Activated naive CD4-positive, alpha-beta T cell treated with anti-CD3 and anti-CD28 coated beads for 36 hours (primary cell): ENCODE measurements at regions of chr6 and their contacts with region 1.

Region 1: DNA sequence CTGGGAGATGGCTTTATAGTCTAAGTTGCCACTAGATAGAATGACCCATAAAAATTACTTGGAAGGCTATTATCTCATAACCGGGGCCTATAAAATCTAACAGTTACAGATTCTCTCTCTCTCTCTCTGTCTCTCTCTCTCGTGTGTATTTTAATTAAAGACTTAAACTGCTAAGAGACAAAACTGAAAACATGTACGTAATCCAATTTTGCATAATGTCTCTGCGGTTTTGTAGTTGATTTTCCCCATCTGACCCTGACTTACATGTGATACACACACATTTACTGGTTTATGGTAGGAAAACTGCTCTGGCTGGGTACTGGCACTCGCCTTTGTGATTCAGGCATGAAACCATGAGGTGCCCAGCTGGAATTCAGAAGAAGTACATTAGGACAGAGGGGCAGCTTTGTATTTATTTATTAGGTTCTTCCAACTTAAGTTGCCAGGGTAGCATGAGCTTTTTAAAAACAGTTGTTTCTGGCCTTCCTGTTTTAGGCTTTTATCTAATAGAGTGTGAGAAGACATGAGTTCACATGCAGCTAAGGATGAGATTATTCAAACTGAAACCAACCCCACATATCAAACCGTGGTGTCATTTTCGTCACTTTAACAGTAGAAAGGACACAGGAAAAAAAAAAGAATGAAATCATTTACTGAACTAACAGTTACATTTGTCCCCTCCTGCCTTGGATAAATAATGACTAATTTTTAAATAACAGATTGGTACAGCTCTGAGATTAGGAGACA is 182.5 kb downstream of the GMPR start:
- DNase-seq: peak; percentile 66
- H3K4me3 Mint-ChIP-seq: peak overlapping the region; percentile 45
- H3K27ac Mint-ChIP-seq: peak overlapping the region; percentile 95
- H3K4me1 Mint-ChIP-seq: peaks cover 42% of the 10 kb centered on the region
- H3K27me3 Mint-ChIP-seq: no peaks in the 10 kb centered on the region

Region 2: DNA sequence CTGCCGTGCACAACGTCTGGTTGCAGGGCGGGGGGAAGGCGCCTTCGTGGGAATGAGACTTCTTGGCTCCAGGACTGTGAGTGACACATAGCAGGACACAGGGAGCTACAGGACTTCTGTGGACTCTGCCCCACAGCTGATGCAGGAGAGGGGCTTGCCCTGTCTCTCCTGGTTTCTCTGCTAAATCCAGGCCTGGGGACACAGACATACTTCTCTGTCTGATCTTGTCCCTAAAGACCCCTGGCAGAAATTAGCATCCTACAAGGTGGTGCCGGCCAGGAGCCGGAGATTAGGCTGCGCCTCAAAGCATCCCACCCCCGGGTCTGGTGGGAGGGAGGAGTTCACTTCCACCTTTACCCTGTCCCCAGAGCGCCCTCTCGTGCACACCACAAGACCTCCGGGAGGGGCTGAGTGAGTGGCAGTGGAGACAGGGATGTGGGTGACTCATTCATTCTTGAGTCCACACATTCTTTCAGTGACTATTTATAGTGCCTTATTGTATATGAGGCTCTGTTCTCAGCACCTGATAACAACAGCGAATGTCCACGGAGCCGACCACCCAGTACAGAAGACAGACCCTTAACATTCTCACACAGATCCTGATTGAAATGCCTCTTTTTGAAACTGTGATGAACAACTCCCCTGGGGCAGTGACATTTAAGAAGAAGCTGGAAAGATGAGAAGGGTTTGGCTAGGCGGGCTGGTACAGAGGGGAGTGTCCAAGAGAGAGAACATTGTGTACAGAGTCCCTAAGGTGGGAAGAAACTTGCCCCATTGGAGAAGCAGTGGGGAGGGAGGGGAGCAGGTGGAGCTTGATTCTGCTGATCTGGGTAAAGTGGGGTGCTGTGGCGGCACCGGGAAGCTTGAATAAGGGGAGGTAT is 143.5 kb before region 1 on chr6:
- CTCF ChIA-PET with region 1: no interaction called
- intact Hi-C with region 1: no loop called
- DNase-seq: peak; percentile 42
- H3K4me3 Mint-ChIP-seq: no peak overlapping the region
- H3K27ac Mint-ChIP-seq: no peak overlapping the region
- H3K4me1 Mint-ChIP-seq: peaks cover 2% of the 10 kb centered on the region
- H3K27me3 Mint-ChIP-seq: no peaks in the 10 kb centered on the region

Region 3: DNA sequence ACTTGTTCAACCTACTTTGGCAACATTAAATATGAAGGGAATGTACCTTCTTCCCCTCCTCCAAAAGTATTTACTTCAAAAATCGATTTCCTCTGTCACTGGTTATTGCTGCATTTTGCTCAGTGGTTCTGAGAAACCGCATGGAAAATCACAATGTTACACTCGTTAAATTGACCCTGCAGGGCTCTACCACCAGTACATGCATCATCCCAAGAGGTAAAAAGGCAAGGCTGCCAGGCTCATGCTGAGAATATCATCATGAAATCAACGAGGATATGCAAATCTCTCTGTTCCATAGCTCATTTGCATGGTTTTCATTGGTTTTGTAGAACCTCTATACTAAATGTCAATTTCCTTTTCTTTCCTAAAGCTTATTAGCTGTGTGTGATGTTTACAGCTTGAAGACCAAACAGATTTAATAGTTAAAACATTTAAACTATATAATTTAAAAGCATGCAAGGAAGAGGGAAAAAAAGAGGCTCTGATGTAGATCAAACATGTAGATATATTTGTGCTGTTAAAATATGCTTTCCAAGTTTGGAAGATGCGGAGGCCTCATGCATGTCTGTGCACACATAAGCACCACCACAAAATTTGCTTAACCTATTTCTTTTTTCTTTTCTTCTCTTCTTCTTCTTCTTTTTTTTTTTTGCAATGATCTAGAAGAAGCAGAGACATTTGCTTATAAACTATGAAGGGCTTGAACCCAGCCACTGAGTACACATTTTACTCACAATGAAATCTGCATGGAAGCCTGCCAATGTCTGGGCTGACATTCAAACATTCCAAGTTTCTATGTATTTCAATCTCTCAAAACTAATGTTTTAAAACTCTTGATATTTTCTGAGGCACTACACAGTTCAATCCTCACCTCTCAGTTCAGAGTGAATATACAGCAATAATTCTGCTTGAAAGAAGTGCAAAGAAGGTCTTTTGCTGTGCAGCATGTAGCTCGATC is 11.5 kb after region 1 on chr6:
- CTCF ChIA-PET with region 1: interaction called, 5 read pairs
- intact Hi-C with region 1: loop called (anchors 1 kb)
- DNase-seq: no peak
- H3K4me3 Mint-ChIP-seq: no peak overlapping the region
- H3K27ac Mint-ChIP-seq: peak overlapping the region; percentile 54
- H3K4me1 Mint-ChIP-seq: peaks cover 50% of the 10 kb centered on the region
- H3K27me3 Mint-ChIP-seq: no peaks in the 10 kb centered on the region

Region 4: DNA sequence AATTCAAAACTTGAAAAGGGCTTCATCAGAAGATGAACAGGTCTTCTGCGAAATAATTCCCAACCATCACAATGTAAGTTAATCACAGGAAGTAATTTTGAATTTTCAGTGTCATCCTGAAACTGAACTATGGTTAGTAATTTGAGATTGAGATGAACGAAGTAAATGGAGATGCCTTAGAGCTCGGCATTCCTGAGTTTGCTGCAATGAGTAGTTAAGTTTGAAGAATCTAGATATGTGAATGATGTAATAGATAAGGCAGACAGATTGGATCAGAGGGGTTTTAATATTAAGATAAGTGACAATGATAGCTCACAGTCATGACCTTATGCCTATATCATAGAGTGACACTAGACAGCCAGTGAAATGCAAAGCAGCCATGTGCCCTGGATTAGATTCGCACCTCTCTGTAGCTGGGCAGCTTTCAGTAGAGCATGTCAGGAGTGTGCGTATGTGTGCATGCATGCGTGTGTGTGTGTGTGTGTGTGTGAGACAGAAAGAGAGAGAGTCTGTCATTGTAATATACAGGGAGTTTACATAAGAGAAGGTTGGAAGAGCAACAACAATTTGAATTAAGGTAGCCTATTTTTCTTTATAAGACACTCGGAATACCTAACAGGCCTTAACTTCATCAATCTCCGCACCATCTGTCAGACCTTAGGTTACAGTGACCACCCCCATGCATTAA is 50.5 kb after region 1 on chr6:
- CTCF ChIA-PET with region 1: interaction called, 3 read pairs
- intact Hi-C with region 1: loop called (anchors 1 kb)
- DNase-seq: no peak
- H3K4me3 Mint-ChIP-seq: no peak overlapping the region
- H3K27ac Mint-ChIP-seq: peak overlapping the region; percentile 68
- H3K4me1 Mint-ChIP-seq: peaks cover 60% of the 10 kb centered on the region
- H3K27me3 Mint-ChIP-seq: no peaks in the 10 kb centered on the region

Region 5: GRCh38 chr6:16591396-16592222 is 170.7 kb after region 1 on chr6:
- CTCF ChIA-PET with region 1: no interaction called
- intact Hi-C with region 1: loop called (anchors 5 kb)
- DNase-seq: peak; percentile 46
- H3K4me3 Mint-ChIP-seq: no peak overlapping the region
- H3K27ac Mint-ChIP-seq: peak overlapping the region; percentile 48
- H3K4me1 Mint-ChIP-seq: peaks cover 18% of the 10 kb centered on the region
- H3K27me3 Mint-ChIP-seq: no peaks in the 10 kb centered on the region

Region 6: DNA sequence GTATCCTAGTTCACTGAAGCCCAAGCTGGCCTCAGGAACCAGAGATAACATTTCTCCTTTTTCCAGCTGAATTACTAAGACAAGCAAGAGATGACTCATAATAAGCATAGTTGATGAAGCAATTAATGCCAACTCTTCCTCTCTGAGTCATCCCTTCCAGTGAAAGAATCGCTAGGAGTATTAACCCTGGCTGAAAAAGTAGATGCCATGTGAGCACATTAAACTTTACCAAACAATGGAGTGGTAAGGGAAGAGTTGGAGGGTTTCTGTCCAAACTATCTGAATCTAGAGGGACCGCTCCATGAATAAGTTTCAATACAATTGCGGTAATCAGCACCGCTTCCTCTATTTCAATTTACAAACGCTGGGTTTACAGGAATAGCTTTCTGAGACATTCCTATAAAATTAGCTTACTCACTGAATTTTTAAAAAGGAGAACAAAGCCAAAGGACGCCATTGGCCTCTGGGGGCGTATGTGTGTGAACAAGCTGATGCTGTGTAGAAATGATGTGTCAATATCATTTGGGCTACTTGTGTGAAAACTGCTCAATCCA is 292.1 kb after region 1 on chr6:
- CTCF ChIA-PET with region 1: no interaction called
- intact Hi-C with region 1: loop called (anchors 2 kb)
- DNase-seq: peak; percentile 23
- H3K4me3 Mint-ChIP-seq: peak overlapping the region; percentile 51
- H3K27ac Mint-ChIP-seq: peak overlapping the region; percentile 75
- H3K4me1 Mint-ChIP-seq: peaks cover 29% of the 10 kb centered on the region
- H3K27me3 Mint-ChIP-seq: no peaks in the 10 kb centered on the region